HepG2 (cell line): ENCODE measurements at regions of chr20 and their contacts with region 1.

Region 1: GRCh38 chr20:18137412-18138265 is at the starts of genes KAT14 and PET117:
- DNase-seq: peak; percentile 85
- ATAC-seq: peak; percentile 94
- H3K4me3 ChIP-seq: peak within 1 kb of the TSS; percentile 87 to 92 (median 91)
- H3K27ac ChIP-seq: peak within 1 kb of the TSS; percentile 88
- H3K4me1 ChIP-seq: peaks cover 37% of the 10 kb centered on the region
- H3K27me3 ChIP-seq: no peaks in the 10 kb centered on the region; a peak in 2 of 5 replicates
- CTCF ChIP-seq: peak; percentile 30
- EP300 ChIP-seq: peak; percentile 64 to 76; a peak in 3 of 4 replicates
- POLR2A ChIP-seq: peak; percentile 94 to 96
- RAD21 ChIP-seq: peak; percentile 80
- total RNA-seq, gene KAT14: 15.1 and 15.7 TPM in 2 replicates
- total RNA-seq, gene PET117: 48.2 and 52.3 TPM in 2 replicates

Region 2: GRCh38 chr20:17518339-17519052 is 619.1 kb before region 1 on chr20:
- CTCF ChIA-PET with region 1: no interaction called
- POLR2A ChIA-PET with region 1: no interaction called
- in situ Hi-C with region 1: no loop called
- intact Hi-C with region 1: no loop called
- DNase-seq: no peak
- ATAC-seq: no peak
- H3K4me3 ChIP-seq: no peak overlapping the region
- H3K27ac ChIP-seq: no peak overlapping the region
- H3K4me1 ChIP-seq: peaks cover 9% of the 10 kb centered on the region; the same call in 1 of the 2 replicates
- H3K27me3 ChIP-seq: peaks cover 4 to 50% of the 10 kb centered on the region in 2 experiments; a peak in 4 of 5 replicates
- CTCF ChIP-seq: no peak
- EP300 ChIP-seq: no peak
- POLR2A ChIP-seq: no peak
- RAD21 ChIP-seq: no peak

Region 3: DNA sequence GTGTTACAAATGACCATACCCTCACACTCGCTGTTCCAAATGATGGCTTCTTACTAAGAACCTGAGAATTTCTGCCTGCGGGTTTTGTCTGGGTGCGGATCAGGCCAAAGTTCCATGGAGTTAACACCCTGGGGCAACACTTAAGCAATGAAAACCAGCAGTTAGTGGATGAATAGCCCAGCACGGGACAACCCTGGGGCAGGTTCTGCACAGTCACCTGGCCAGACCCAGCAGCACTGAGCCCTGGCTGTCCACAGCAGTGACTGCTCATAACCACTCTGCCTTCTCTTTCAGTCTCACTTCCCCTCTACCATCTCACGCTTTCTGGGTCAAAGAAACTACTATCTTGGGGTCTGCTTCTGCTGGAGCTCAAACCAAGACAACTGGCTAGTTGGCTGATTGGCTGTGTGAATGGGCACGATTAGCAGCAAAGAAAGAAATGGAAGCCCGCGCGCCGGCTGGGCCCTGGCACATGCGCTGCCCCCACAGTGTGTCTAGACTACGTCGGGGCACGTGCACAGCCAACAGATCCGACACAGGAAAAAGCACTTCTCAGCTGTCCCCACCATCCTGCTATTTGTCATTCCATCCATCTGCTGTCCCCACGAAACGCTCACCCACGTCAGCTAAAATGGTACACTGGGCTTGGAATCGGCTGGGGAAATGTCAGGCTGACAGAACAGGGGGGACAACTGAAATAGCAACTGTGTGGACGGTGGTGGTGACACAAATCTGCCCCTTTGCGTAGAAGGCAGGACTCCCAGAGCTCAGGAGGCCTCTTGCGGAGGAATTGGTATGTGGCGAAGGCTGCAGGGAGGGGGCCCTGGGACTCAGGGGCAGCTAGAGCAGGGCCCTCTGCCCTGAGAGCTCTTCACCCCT is 132.2 kb before region 1 on chr20:
- CTCF ChIA-PET with region 1: no interaction called
- POLR2A ChIA-PET with region 1: interaction called, 3 read pairs
- in situ Hi-C with region 1: no loop called
- intact Hi-C with region 1: loop called (anchors 10 kb)
- DNase-seq: no peak
- ATAC-seq: peak; percentile 45
- H3K4me3 ChIP-seq: peak overlapping the region in 1 of 3 experiments; percentile 44; a peak in 2 of 6 replicates
- H3K27ac ChIP-seq: no peak overlapping the region
- H3K4me1 ChIP-seq: peaks cover 73% of the 10 kb centered on the region
- H3K27me3 ChIP-seq: peaks cover 7 to 41% of the 10 kb centered on the region in 2 experiments; a peak in 4 of 5 replicates
- CTCF ChIP-seq: peak; percentile 13; the same call in 1 of the 2 replicates
- EP300 ChIP-seq: no peak
- POLR2A ChIP-seq: no peak
- RAD21 ChIP-seq: no peak

Region 4: DNA sequence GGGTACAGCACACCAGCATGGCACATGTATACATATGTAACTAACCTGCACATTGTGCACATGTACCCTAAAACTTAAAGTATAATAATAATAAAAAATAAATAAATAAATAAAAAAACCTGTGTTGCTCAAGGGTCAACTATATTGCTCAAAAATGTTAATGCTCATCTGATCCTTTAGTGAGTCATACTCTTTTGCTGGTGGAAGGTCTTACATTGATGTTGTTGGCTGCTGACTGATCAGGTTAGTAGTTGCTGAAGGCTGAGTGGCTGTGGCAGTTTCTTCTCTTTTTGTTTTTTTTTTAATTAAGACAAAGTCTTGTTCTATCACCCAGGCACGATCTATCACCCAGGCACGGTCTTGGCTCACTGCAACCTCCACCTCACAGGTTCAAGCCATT is 400.0 kb after region 1 on chr20:
- CTCF ChIA-PET with region 1: no interaction called
- POLR2A ChIA-PET with region 1: no interaction called
- in situ Hi-C with region 1: no loop called
- intact Hi-C with region 1: no loop called
- DNase-seq: no peak
- ATAC-seq: no peak
- H3K4me3 ChIP-seq: no peak overlapping the region
- H3K27ac ChIP-seq: no peak overlapping the region
- H3K4me1 ChIP-seq: peaks cover 20% of the 10 kb centered on the region
- H3K27me3 ChIP-seq: no peaks in the 10 kb centered on the region
- CTCF ChIP-seq: no peak
- EP300 ChIP-seq: no peak
- POLR2A ChIP-seq: no peak
- RAD21 ChIP-seq: no peak